ENCODE measurements at regions of chr6 and their contacts with region 1.

Region 1: DNA sequence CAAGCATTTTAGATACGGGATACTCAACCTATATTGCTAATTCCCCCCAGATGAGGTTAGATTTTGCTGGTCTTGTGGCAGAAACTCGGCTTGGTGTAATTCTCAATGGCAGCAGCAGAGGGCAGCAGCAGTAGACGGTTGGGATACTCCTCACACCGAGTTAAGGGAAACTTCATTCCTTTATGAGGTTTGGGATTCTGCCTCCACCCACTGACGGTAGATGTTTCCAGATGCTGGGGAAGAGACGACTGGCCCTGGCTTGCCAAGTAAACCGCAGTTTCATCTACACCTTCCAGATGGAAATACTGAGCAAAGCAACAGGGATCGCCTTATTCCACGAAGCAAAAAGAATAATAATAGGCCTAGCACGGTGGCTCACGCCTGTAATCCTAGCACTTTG is 8.2 kb upstream of the TBC1D7 start:
- DNase-seq: peak in 5 of 6 donors; percentile 59 to 87 (median 77)
- ATAC-seq: peak; percentile 76 to 94 (median 93)
- H3K4me3 ChIP-seq: no peak overlapping the region
- H3K27ac ChIP-seq: no peak overlapping the region
- H3K4me1 ChIP-seq: no peaks in the 10 kb centered on the region
- H3K27me3 ChIP-seq: no peaks in the 10 kb centered on the region
- CTCF ChIP-seq: peak; percentile 52 to 78 (median 72)

Region 2: DNA sequence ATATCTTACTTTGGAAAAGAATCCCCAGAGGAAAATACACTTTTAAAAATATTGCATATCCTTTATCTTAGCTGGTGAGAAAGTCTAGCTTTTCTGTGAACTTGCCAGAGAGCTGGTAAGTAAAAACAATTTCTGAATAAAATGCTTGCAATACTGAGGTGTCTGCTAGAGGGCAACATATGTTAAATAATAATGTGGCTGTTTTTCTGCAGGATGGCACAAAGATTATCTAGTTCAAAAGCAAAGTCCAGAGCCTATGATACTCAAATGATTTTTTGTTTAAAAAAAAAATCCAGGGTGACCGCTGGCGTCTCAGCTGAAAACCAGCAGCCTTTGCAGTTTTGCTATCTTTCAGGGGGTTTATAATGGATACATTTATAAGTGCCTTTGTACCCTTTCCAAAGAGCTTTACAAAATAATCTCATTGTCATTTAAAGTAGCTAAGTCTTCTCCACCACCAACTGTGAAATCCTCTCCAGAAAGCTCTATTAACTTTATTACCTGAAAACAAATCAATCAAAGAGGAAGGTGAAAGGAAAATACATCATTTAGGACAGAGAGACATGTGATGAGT is 425.1 kb before region 1 on chr6:
- intact Hi-C with region 1: loop called in 2 of 3 experiments (anchors 5 kb)
- DNase-seq: no peak
- ATAC-seq: peak; percentile 55 to 82 (median 74)
- H3K4me3 ChIP-seq: no peak overlapping the region
- H3K27ac ChIP-seq: no peak overlapping the region
- H3K4me1 ChIP-seq: no peaks in the 10 kb centered on the region
- H3K27me3 ChIP-seq: no peaks in the 10 kb centered on the region
- CTCF ChIP-seq: peak in 2 of 4 donors; percentile 33 to 44

Region 3: GRCh38 chr6:13383328-13384163 is 47.0 kb after region 1 on chr6:
- intact Hi-C with region 1: no loop called
- DNase-seq: peak in 3 of 6 donors; percentile 32 to 41 (median 37)
- ATAC-seq: peak; percentile 62 to 94 (median 84)
- H3K4me3 ChIP-seq: no peak overlapping the region
- H3K27ac ChIP-seq: peak overlapping the region in 2 of 4 donors; percentile 59 to 67
- H3K4me1 ChIP-seq: peaks cover 0 to 10% (median 4%) of the 10 kb centered on the region in 3 donors
- H3K27me3 ChIP-seq: no peaks in the 10 kb centered on the region
- CTCF ChIP-seq: no peak

Region 4: GRCh38 chr6:13538084-13538483 is 201.5 kb after region 1 on chr6:
- intact Hi-C with region 1: loop called in 1 of 3 experiments (anchors 5 kb)
- DNase-seq: no peak
- ATAC-seq: peak in 3 of 4 donors; percentile 62 to 81 (median 77)
- H3K4me3 ChIP-seq: no peak overlapping the region
- H3K27ac ChIP-seq: no peak overlapping the region
- H3K4me1 ChIP-seq: no peaks in the 10 kb centered on the region
- H3K27me3 ChIP-seq: no peaks in the 10 kb centered on the region
- CTCF ChIP-seq: no peak

Region 5: GRCh38 chr6:13563009-13563408 is 226.5 kb after region 1 on chr6:
- intact Hi-C with region 1: no loop called
- DNase-seq: no peak
- ATAC-seq: no peak
- H3K4me3 ChIP-seq: no peak overlapping the region
- H3K27ac ChIP-seq: no peak overlapping the region
- H3K4me1 ChIP-seq: no peaks in the 10 kb centered on the region
- H3K27me3 ChIP-seq: no peaks in the 10 kb centered on the region
- CTCF ChIP-seq: no peak

Measured in pancreas (tissue), 10 donors.